Activated naive CD4-positive, alpha-beta T cell treated with anti-CD3 and anti-CD28 coated beads for 36 hours (primary cell): ENCODE measurements at regions of chr22 and their contacts with region 1.

Region 1: DNA sequence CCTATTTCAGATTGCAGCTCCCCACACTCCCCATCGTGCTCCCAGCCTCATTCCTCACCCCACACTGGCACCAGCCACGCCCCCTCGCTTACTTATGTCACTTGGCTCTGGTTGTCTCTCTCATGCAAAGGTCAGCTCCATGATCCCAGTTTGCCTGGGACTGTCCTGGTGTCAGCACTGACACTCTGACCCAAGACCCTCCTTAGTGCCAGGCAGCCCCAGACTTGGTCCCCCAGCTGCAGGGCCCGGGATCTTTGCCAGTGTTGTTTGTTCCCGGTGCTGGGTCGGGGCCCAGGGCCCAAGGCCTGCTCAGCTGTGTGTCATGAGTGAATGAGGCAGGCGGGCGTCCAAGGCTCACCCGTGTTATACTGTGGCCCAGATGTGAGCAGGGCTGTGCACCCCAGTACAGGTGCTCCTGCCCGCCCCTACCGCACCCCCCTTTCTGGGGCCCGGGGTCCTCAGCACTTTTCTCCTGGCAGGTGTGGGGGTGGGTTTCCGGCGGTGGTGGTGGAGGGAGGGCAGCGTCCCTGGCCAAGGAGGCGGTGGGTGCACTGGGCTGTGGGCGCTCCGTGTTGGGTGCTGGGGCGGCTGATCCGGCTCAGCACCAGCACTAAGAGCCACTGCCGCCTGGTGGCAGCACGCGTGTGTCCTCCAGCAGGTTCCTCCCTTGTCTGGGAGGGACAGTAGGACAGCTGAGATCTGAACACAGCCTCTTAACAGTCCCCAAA is 19.5 kb downstream of the IL17REL start:
- DNase-seq: peak; percentile 85
- H3K4me3 Mint-ChIP-seq: no peak overlapping the region
- H3K27ac Mint-ChIP-seq: peak overlapping the region; percentile 19
- H3K4me1 Mint-ChIP-seq: peaks cover 4% of the 10 kb centered on the region
- H3K27me3 Mint-ChIP-seq: no peaks in the 10 kb centered on the region

Region 2: DNA sequence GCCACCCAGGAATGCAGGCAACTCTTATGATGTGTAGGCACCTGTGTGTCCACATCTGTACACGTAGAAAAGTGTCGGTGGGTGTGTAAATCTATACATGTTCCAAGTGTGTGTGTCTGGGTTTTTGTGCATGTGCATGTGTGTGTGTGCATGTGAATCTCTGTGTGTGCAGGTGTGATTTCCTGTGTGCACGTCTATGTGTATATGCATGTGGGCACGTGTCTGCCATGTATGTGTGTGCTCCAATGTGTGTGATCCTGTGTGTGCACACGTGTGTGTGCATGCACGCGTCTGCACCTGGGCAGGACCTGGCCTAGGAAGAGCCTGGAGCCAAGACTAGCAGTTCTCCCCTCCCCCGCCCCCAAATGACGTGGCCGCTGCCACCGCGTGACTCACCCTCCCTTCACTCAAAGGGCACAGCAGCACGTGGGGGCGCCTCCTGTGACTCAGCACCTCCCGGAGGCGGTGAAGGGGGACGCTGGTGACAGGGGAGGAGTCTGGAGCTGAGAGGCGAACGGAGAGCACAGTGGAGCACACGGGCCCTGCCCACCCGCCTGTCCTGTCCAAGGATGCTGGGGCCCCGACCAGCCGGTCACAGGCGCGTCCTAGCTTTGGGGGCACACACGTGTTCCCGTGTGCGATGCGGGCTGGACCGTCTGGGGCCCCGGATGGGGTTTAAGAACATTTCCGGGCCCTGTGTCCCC is 22.4 kb before region 1 on chr22:
- CTCF ChIA-PET with region 1: no interaction called
- intact Hi-C with region 1: no loop called
- DNase-seq: peak; percentile 99
- H3K4me3 Mint-ChIP-seq: peak overlapping the region; percentile 83
- H3K27ac Mint-ChIP-seq: peak overlapping the region; percentile 93
- H3K4me1 Mint-ChIP-seq: peaks cover 33% of the 10 kb centered on the region
- H3K27me3 Mint-ChIP-seq: no peaks in the 10 kb centered on the region

Region 3: GRCh38 chr22:50008151-50009040 is 15.3 kb after region 1 on chr22:
- CTCF ChIA-PET with region 1: interaction called, 11 read pairs
- intact Hi-C with region 1: no loop called
- DNase-seq: no peak
- H3K4me3 Mint-ChIP-seq: no peak overlapping the region
- H3K27ac Mint-ChIP-seq: no peak overlapping the region
- H3K4me1 Mint-ChIP-seq: peaks cover 19% of the 10 kb centered on the region
- H3K27me3 Mint-ChIP-seq: peaks cover 10% of the 10 kb centered on the region

Region 4: GRCh38 chr22:50030297-50031188 is 37.5 kb after region 1 on chr22:
- CTCF ChIA-PET with region 1: interaction called, 68 read pairs
- intact Hi-C with region 1: loop called (anchors 1 kb)
- DNase-seq: peak; percentile 93
- H3K4me3 Mint-ChIP-seq: no peak overlapping the region
- H3K27ac Mint-ChIP-seq: no peak overlapping the region
- H3K4me1 Mint-ChIP-seq: peaks cover 13% of the 10 kb centered on the region
- H3K27me3 Mint-ChIP-seq: peaks cover 21% of the 10 kb centered on the region